ENCODE measurements at regions of chr18 and their contacts with region 1.

Region 1: GRCh38 chr18:54805571-54806334 is 22.5 kb upstream of the RAB27B start:
- DNase-seq: peak in 1 of 9 donors; percentile 4
- ATAC-seq: peak; percentile 93
- H3K4me3 ChIP-seq: no peak overlapping the region
- H3K4me3 Mint-ChIP-seq: peak overlapping the region in 4 of 10 donors; percentile 23 to 33 (median 30)
- H3K27ac ChIP-seq: no peak overlapping the region
- H3K27ac Mint-ChIP-seq: peak overlapping the region in 2 of 9 donors; percentile 13 to 29
- H3K4me1 ChIP-seq: peaks cover 0 to 4% of the 10 kb centered on the region in 2 donors
- H3K4me1 Mint-ChIP-seq: peaks cover 6 to 14% (median 10%) of the 10 kb centered on the region in 7 donors
- H3K27me3 ChIP-seq: no peaks in the 10 kb centered on the region
- H3K27me3 Mint-ChIP-seq: peaks cover 0 to 13% (median 0%) of the 10 kb centered on the region in 5 donors

Region 2: DNA sequence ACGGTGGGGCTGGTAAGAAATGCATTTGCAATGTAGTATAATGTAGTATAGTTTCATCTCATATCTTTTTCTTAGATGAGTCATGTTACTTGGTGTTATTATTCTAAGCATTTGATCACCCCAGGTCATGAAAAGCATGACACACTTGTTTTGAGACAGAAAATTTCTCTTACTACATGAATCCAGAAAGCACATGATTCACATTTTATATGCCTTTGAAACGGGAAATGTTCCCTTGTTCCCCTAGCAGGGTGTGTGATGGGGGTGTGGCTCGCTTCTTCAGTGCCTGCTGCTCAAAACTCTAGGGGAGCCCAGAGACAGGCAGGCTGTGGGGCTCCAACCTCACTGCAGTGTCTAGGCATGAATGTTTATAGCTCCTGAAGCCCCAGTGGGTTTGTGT is 93.4 kb before region 1 on chr18:
- CTCF ChIA-PET with region 1: no interaction called
- POLR2A ChIA-PET with region 1: no interaction called
- intact Hi-C with region 1: loop called in 1 of 2 experiments (anchors 2 kb)
- DNase-seq: no peak
- ATAC-seq: no peak
- H3K4me3 ChIP-seq: no peak overlapping the region
- H3K4me3 Mint-ChIP-seq: no peak overlapping the region
- H3K27ac ChIP-seq: no peak overlapping the region
- H3K27ac Mint-ChIP-seq: peak overlapping the region in 1 of 9 donors; percentile 46
- H3K4me1 ChIP-seq: peaks cover 6 to 15% of the 10 kb centered on the region in 2 donors
- H3K4me1 Mint-ChIP-seq: peaks cover 16 to 49% (median 41%) of the 10 kb centered on the region in 7 donors
- H3K27me3 ChIP-seq: no peaks in the 10 kb centered on the region
- H3K27me3 Mint-ChIP-seq: peaks cover 0 to 31% (median 7%) of the 10 kb centered on the region in 5 donors

Region 3: GRCh38 chr18:54776282-54776977 is 29.3 kb before region 1 on chr18:
- CTCF ChIA-PET with region 1: no interaction called
- POLR2A ChIA-PET with region 1: no interaction called
- intact Hi-C with region 1: loop called in 1 of 2 experiments (anchors 2 kb)
- DNase-seq: peak in 1 of 9 donors; percentile 24
- ATAC-seq: peak; percentile 62
- H3K4me3 ChIP-seq: no peak overlapping the region
- H3K4me3 Mint-ChIP-seq: no peak overlapping the region
- H3K27ac ChIP-seq: no peak overlapping the region
- H3K27ac Mint-ChIP-seq: peak overlapping the region in 1 of 9 donors; percentile 75
- H3K4me1 ChIP-seq: no peaks in the 10 kb centered on the region
- H3K4me1 Mint-ChIP-seq: peaks cover 0 to 15% (median 0%) of the 10 kb centered on the region in 7 donors
- H3K27me3 ChIP-seq: no peaks in the 10 kb centered on the region
- H3K27me3 Mint-ChIP-seq: peaks cover 0 to 3% (median 0%) of the 10 kb centered on the region in 5 donors

Region 4: GRCh38 chr18:54828281-54828881 is 22.6 kb after region 1 on chr18 and contains the start of gene RAB27B:
- CTCF ChIA-PET with region 1: no interaction called
- POLR2A ChIA-PET with region 1: interaction called, 3 read pairs
- intact Hi-C with region 1: loop called in 1 of 2 experiments (anchors 2 kb)
- DNase-seq: peak; percentile 41 to 68 (median 61)
- ATAC-seq: peak; percentile 96
- H3K4me3 ChIP-seq: peak within 1 kb of the TSS; percentile 72
- H3K4me3 Mint-ChIP-seq: peak within 1 kb of the TSS; percentile 87 to 95 (median 92)
- H3K27ac ChIP-seq: peak within 1 kb of the TSS; percentile 63
- H3K27ac Mint-ChIP-seq: peak within 1 kb of the TSS in 8 of 9 donors; percentile 60 to 87 (median 76)
- H3K4me1 ChIP-seq: no peaks in the 10 kb centered on the region
- H3K4me1 Mint-ChIP-seq: peaks cover 17 to 45% (median 24%) of the 10 kb centered on the region in 7 donors
- H3K27me3 ChIP-seq: no peaks in the 10 kb centered on the region
- H3K27me3 Mint-ChIP-seq: peaks cover 0 to 34% (median 0%) of the 10 kb centered on the region in 5 donors
- total RNA-seq, gene RAB27B: 1.3 to 6.4 (median 1.6) TPM